Naive thymus-derived CD4-positive, alpha-beta T cell (primary cell): ENCODE measurements at regions of chr19 and their contacts with region 1.

Region 1: DNA sequence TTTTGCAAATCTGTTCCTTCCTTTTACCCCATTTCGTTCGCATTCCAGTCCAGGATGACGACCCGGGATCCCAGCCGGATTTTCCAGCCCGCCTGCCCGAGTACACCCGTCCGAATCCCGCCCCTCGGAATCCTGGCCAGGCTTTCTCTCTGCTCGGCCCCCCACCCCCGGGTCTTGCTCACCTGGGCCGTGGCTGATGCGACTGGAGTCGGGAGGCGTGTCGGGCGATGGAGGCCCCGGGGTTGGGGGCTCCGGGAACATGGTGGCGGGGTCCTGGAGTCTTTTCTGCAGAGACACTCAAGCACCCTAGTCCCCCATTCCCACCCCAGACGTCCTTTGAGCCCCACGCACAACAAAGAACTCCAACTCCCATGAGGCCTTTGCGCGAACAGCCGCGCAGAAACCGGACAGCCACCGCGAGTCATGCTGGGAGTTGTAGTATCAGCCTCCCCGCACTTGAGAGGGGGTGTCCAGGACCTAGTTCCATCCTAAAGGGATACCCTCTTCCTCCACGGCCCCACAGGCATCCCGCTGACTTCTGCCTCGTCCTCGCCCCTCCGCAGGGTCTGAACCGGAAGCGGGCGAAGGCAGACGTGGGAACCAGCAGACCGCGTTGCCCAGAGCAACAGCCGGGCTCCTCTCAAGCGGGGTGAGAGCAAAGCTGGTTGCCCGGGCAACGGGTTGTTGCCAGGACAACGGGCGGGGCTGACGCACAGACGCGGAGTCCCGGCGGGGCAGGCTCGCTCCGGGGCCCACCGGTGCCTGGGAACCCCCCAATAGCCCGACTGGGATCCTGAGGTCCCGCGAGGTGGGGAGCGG is 1.1 kb downstream of the SYT5 start:
- DNase-seq: peak; percentile 87 to 98 (median 92)
- ATAC-seq: peak; percentile 93
- H3K4me3 ChIP-seq: peak overlapping the region; percentile 64
- H3K4me3 Mint-ChIP-seq: peak overlapping the region; percentile 49 to 85 (median 82)
- H3K27ac ChIP-seq: peak overlapping the region; percentile 41
- H3K27ac Mint-ChIP-seq: peak overlapping the region; percentile 38 to 94 (median 86)
- H3K4me1 ChIP-seq: peaks cover 15 to 32% of the 10 kb centered on the region in 2 donors
- H3K4me1 Mint-ChIP-seq: peaks cover 9 to 36% (median 26%) of the 10 kb centered on the region in 7 donors
- H3K27me3 ChIP-seq: peaks cover 13 to 50% of the 10 kb centered on the region in 2 donors
- H3K27me3 Mint-ChIP-seq: peaks cover 63 to 79% (median 67%) of the 10 kb centered on the region in 5 donors

Region 2: GRCh38 chr19:55160128-55160985 is 18.6 kb before region 1 on chr19:
- CTCF ChIA-PET with region 1: no interaction called
- POLR2A ChIA-PET with region 1: no interaction called
- intact Hi-C with region 1: loop called in 1 of 2 experiments (anchors 1 kb)
- DNase-seq: peak; percentile 79 to 92 (median 85)
- ATAC-seq: peak; percentile 98
- H3K4me3 ChIP-seq: no peak overlapping the region
- H3K4me3 Mint-ChIP-seq: peak overlapping the region in 4 of 10 donors; percentile 21 to 66 (median 50)
- H3K27ac ChIP-seq: no peak overlapping the region
- H3K27ac Mint-ChIP-seq: peak overlapping the region in 3 of 9 donors; percentile 17 to 50 (median 18)
- H3K4me1 ChIP-seq: peaks cover 0 to 7% of the 10 kb centered on the region in 2 donors
- H3K4me1 Mint-ChIP-seq: peaks cover 0 to 16% (median 8%) of the 10 kb centered on the region in 7 donors
- H3K27me3 ChIP-seq: peaks cover 0 to 10% of the 10 kb centered on the region in 2 donors
- H3K27me3 Mint-ChIP-seq: peaks cover 25 to 56% (median 41%) of the 10 kb centered on the region in 5 donors

Region 3: DNA sequence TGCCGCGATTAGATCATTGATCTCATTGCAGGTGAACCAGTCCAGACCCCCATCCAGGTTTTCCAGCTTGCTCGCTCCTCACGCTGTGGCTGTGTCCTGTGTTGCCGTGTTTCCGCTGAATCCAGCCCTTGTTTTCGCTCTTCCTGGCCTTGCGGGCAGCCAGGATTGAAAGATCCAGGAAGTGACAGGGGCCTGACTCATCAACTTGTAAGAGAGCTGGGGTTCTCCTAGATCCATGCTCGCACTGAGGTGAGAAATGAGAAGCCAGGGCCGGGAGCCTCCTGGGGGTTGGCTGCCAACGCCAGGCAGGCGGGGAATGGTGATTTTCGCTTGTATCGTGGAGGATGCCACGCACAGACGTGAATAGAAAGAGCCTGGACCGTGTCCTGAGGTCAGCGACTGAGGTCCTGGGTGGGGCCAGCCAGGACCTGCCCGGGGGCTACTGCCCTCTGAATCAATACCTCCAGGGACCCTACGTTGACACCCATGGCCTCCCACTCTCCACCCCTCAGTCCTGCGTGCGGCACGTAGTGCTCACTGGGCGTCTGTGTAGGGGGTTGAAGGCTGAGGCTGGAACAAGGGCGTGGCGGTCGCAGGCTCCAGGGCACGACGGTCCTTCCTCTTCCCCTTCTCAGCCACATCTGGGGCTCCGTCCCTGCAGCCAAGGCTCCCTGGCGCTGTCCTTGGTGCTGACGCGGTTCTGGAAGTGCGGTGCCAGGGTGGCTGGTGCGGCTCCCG is 37.6 kb after region 1 on chr19:
- CTCF ChIA-PET with region 1: no interaction called
- POLR2A ChIA-PET with region 1: no interaction called
- intact Hi-C with region 1: loop called (anchors 1 to 5 kb)
- DNase-seq: peak in 8 of 9 donors; percentile 10 to 69 (median 32)
- ATAC-seq: peak; percentile 80
- H3K4me3 ChIP-seq: no peak overlapping the region
- H3K4me3 Mint-ChIP-seq: peak overlapping the region in 7 of 10 donors; percentile 16 to 66 (median 35)
- H3K27ac ChIP-seq: no peak overlapping the region
- H3K27ac Mint-ChIP-seq: peak overlapping the region in 2 of 9 donors; percentile 55 to 62
- H3K4me1 ChIP-seq: peaks cover 0 to 10% of the 10 kb centered on the region in 2 donors
- H3K4me1 Mint-ChIP-seq: peaks cover 11 to 18% (median 12%) of the 10 kb centered on the region in 7 donors
- H3K27me3 ChIP-seq: no peaks in the 10 kb centered on the region
- H3K27me3 Mint-ChIP-seq: peaks cover 5 to 31% (median 29%) of the 10 kb centered on the region in 5 donors